GM18951 (cell line): ENCODE measurements at regions of chr16 and their contacts with region 1.

Region 1: GRCh38 chr16:53061701-53062159 is 6.9 kb downstream of the CHD9 start:
- POLR2A ChIP-seq: peak; percentile 17

Region 2: DNA sequence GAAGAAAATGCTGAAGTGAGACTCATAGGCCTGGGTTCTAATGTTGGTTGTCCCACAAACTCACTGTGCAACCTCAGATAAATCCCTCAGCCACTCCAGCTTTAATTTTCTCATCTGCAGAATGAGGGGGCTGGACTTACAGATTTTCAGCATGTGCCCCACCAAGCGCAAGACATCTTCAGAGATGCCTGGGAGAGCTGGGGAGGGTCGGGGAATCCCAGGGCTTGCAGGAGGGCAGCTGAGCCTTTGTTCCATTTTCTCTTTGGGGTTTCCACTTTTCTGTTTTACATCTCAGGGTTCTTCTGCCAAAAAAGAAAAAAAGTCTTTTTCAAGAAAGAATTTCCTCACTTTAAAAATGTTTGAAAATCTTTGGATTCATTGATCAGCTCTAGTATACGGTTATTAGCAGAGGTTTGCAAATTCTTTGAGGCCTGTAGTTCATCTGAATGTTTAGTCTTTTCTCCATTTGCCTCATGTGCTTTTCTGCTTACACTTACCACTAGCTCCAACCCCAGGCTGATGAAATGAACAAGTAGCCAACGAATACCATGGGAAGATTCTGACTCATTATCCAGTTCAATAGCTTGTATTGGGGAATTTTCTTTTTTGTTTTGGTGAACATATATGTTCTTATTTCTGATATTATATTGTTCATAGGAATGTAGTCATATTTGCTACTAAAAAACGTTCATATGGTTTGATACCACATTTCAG is 49.5 kb after region 1 on chr16:
- in situ Hi-C with region 1: no loop called
- POLR2A ChIP-seq: no peak

Region 3: DNA sequence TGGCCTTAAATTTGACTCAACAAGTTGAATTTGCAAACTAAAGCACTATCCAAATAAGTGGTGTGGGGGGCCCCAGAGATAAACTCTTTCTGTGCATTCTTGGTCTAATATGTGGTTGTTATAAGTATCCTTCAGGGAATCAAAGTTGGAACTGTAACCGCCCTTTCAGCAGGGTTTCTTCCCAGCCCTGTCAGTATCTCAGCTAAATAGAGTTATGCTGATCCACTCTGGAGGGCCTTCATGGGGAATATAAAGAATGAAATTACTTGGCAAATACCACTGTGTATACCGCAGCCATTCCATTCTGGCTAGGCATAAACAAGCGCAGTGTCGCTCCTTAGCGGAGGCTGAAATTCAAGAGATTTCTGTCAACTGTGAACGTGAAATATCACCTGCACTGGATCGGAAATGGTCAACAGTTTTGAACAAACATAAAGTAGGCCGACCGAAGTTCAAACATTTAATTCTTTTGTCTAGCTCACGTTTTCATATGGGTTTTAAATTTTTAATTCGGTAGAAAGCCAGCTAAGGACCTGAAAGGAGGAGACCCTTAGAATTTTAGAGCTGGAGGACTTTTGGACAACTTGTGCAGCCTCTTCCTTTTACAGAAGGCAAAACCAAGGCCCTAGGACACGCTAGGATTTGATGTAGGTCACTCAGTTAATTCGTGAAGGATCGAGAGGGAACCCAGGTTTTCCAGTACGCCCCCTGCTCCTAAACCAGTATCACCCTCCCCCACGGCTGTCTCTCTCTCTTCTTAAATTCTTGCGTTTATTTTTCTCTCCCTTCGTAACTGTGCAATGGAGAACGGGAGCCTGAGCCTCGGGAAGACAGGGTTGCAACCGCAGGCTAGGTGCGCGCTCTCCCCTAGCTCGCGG is 67.8 kb after region 1 on chr16:
- in situ Hi-C with region 1: loop called (anchors 10 kb)
- POLR2A ChIP-seq: no peak